ENCODE measurements at regions of chr11 and their contacts with region 1.

Region 1: GRCh38 chr11:73976451-73977151 is 6.0 kb downstream of the UCP2 start:
- DNase-seq: peak in 1 of 9 experiments; percentile 27
- ATAC-seq: no peak
- H3K4me3 ChIP-seq: peak overlapping the region in 1 of 2 experiments; percentile 10
- H3K4me3 Mint-ChIP-seq: peak overlapping the region; percentile 100
- H3K27ac ChIP-seq: peak overlapping the region; percentile 0 to 95
- H3K27ac Mint-ChIP-seq: peak overlapping the region; percentile 99
- H3K4me1 ChIP-seq: peaks cover 88% of the 10 kb centered on the region
- H3K4me1 Mint-ChIP-seq: peaks cover 90% of the 10 kb centered on the region
- H3K27me3 ChIP-seq: no peaks in the 10 kb centered on the region
- H3K27me3 Mint-ChIP-seq: no peaks in the 10 kb centered on the region
- CTCF ChIP-seq: no peak

Region 2: DNA sequence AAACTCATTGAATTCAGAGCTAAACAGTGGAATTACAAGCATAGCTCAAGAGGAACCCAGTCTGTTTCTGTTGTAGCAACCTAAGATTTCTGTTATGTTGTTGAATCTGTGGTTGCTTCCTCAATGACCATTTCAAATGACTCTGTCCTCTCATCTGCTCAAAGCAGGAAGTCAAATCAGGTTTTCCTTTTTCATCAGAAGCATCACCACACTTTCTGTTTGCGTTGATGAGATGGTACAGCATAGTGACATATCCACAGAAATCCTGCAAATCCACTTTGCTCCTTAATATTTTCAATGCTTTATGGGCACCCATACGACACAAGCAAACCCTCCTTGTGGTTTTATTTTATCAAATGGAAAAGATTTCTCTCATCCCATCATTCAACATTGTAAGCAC is 18.6 kb after region 1 on chr11:
- CTCF ChIA-PET with region 1: interaction called, 32 read pairs
- POLR2A ChIA-PET with region 1: interaction called, 116 read pairs
- intact Hi-C with region 1: loop called in 1 of 2 experiments (anchors 1 kb)
- DNase-seq: peak in 2 of 9 experiments; percentile 81 to 92
- ATAC-seq: peak; percentile 75
- H3K4me3 ChIP-seq: peak overlapping the region; percentile 1 to 28
- H3K4me3 Mint-ChIP-seq: peak overlapping the region; percentile 74
- H3K27ac ChIP-seq: peak overlapping the region; percentile 87 to 98
- H3K27ac Mint-ChIP-seq: peak overlapping the region; percentile 94
- H3K4me1 ChIP-seq: peaks cover 72% of the 10 kb centered on the region
- H3K4me1 Mint-ChIP-seq: peaks cover 73% of the 10 kb centered on the region
- H3K27me3 ChIP-seq: no peaks in the 10 kb centered on the region
- H3K27me3 Mint-ChIP-seq: no peaks in the 10 kb centered on the region
- CTCF ChIP-seq: no peak

Region 3: DNA sequence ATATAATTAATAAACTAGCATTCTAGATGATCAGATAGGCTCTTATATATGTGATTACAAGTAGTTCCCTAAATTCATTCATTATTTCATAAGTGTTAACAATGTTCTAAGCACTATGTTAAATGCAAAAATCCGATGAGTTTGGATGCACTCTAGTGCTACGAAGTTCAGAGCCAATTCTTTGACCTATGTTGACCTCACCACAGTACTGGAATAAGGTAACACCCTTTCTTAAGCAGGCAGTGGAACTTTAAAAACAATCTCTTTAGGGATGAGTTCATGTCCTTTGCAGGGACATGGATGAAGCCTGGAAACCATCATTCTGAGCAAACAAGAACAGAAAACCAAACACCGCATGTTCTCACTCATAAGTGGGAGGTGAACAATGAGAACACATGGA is 100.6 kb after region 1 on chr11:
- CTCF ChIA-PET with region 1: no interaction called
- POLR2A ChIA-PET with region 1: no interaction called
- intact Hi-C with region 1: no loop called
- DNase-seq: no peak
- ATAC-seq: no peak
- H3K4me3 ChIP-seq: no peak overlapping the region
- H3K4me3 Mint-ChIP-seq: no peak overlapping the region
- H3K27ac ChIP-seq: no peak overlapping the region
- H3K27ac Mint-ChIP-seq: no peak overlapping the region
- H3K4me1 ChIP-seq: no peaks in the 10 kb centered on the region
- H3K4me1 Mint-ChIP-seq: peaks cover 4% of the 10 kb centered on the region
- H3K27me3 ChIP-seq: no peaks in the 10 kb centered on the region
- H3K27me3 Mint-ChIP-seq: no peaks in the 10 kb centered on the region
- CTCF ChIP-seq: no peak

Region 4: DNA sequence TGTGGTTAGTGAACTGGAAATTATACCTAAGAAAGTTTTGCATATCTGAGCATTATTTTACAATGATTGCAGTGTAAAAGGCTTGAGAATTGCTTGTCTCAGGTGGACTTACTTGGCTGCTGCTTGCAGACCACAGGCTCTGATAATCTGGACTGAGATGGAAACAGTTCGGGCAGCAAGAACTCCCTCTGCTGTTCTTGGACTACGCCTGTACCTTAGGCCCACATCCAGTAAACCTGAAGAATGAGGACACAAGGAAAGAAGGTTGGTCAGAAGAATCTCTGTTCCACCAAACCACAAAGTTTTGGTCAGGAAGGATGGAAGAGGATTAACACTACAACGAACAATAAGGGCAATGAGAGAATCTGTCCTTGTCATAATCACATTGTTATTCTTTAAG is 114.1 kb after region 1 on chr11:
- CTCF ChIA-PET with region 1: no interaction called
- POLR2A ChIA-PET with region 1: no interaction called
- intact Hi-C with region 1: no loop called
- DNase-seq: peak in 2 of 9 experiments; percentile 23 to 33
- ATAC-seq: no peak
- H3K4me3 ChIP-seq: no peak overlapping the region
- H3K4me3 Mint-ChIP-seq: no peak overlapping the region
- H3K27ac ChIP-seq: no peak overlapping the region
- H3K27ac Mint-ChIP-seq: no peak overlapping the region
- H3K4me1 ChIP-seq: no peaks in the 10 kb centered on the region
- H3K4me1 Mint-ChIP-seq: no peaks in the 10 kb centered on the region
- H3K27me3 ChIP-seq: no peaks in the 10 kb centered on the region
- H3K27me3 Mint-ChIP-seq: no peaks in the 10 kb centered on the region
- CTCF ChIP-seq: no peak

Region 5: DNA sequence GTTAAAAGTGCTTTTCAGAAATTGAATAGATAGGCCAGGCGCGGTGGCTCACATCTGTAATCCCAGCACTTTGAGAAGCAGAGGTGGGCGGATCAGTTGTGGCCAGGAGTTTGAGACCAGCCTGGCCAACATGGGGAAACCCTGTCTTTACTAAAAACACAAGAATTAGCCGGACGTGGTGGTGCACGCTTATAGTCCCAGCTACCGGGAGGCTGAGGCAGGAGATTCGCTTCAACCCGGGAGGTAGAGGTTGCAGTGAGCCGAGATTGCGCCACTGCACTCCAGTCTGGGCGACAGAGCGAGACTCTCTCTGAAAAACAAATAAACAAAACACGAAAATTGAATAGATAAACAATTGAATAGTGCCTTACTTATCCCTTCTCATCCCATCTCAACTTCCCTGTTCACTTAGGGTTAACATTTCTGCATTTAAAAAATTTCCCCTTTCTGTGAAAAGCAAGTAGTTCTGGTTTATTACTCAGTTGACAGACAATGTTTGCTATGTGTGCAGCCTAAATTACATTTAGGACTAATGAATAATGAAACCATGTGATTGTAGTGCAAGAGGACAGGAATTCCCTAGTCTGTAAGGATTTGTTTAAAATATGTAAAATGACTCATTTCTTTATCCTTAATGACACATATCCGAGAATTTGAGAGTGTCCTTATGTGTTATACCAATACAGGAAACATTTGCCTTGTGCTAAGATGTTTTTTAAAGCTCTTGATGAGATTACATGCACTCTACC is 778.1 kb after region 1 on chr11:
- CTCF ChIA-PET with region 1: no interaction called
- POLR2A ChIA-PET with region 1: no interaction called
- intact Hi-C with region 1: no loop called
- DNase-seq: no peak
- ATAC-seq: no peak
- H3K4me3 ChIP-seq: no peak overlapping the region
- H3K4me3 Mint-ChIP-seq: no peak overlapping the region
- H3K27ac ChIP-seq: no peak overlapping the region
- H3K27ac Mint-ChIP-seq: no peak overlapping the region
- H3K4me1 ChIP-seq: peaks cover 7% of the 10 kb centered on the region
- H3K4me1 Mint-ChIP-seq: peaks cover 40% of the 10 kb centered on the region
- H3K27me3 ChIP-seq: no peaks in the 10 kb centered on the region
- H3K27me3 Mint-ChIP-seq: no peaks in the 10 kb centered on the region
- CTCF ChIP-seq: no peak

Measured in CD8-positive, alpha-beta T cell (primary cell).